Esophagus squamous epithelium (tissue), 5 donors: ENCODE measurements at regions of chr3 and their contacts with region 1.

Region 1: DNA sequence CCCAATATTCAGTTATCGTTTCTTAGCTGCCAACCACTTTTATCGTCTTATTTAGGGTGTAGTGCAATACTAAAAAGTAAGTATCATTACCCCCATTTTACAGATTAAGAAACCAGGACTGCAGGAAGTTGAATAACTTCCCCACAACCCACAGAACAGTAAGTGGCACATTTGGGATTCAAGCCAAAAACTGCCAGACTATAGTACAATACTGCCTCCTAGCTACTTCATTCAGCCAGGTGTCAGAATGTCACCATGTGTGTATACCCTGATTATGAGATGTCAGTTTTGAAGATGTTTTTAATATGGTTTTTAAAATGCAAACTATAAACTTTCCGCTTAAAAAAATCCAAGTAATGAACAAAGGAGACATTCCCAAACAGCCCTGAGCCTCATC is 74.2 kb upstream of the PROK2 start:
- DNase-seq: no peak
- H3K4me3 ChIP-seq: no peak overlapping the region
- H3K27ac ChIP-seq: no peak overlapping the region
- H3K4me1 ChIP-seq: no peaks in the 10 kb centered on the region
- H3K27me3 ChIP-seq: peaks cover 0 to 37% (median 0%) of the 10 kb centered on the region in 4 donors
- CTCF ChIP-seq: peak in 5 of 6 experiments; percentile 30 to 66 (median 36)
- POLR2A ChIP-seq: no peak

Region 2: GRCh38 chr3:71734883-71735282 is 124.2 kb before region 1 on chr3:
- intact Hi-C with region 1: loop called (anchors 10 kb)
- DNase-seq: no peak
- H3K4me3 ChIP-seq: no peak overlapping the region
- H3K27ac ChIP-seq: no peak overlapping the region
- H3K4me1 ChIP-seq: peaks cover 0 to 3% (median 0%) of the 10 kb centered on the region in 3 donors
- H3K27me3 ChIP-seq: no peaks in the 10 kb centered on the region
- CTCF ChIP-seq: no peak
- POLR2A ChIP-seq: no peak